CD4-positive, alpha-beta T cell (primary cell): ENCODE measurements at regions of chr15 and their contacts with region 1.

Region 1: GRCh38 chr15:78077058-78077877 is at the start of gene TBC1D2B:
- DNase-seq: peak; percentile 46 to 88 (median 66)
- ATAC-seq: peak; percentile 73
- H3K4me3 ChIP-seq: peak within 1 kb of the TSS; percentile 96
- H3K4me3 Mint-ChIP-seq: peak within 1 kb of the TSS; percentile 99
- H3K27ac ChIP-seq: peak within 1 kb of the TSS; percentile 68 to 75
- H3K27ac Mint-ChIP-seq: no peak within 1 kb of the TSS
- H3K4me1 ChIP-seq: peaks cover 48% of the 10 kb centered on the region
- H3K4me1 Mint-ChIP-seq: peaks cover 47% of the 10 kb centered on the region
- H3K27me3 ChIP-seq: no peaks in the 10 kb centered on the region
- H3K27me3 Mint-ChIP-seq: no peaks in the 10 kb centered on the region
- CTCF ChIP-seq: no peak
- total RNA-seq, gene TBC1D2B: 89.3 to 97.6 TPM

Region 2: DNA sequence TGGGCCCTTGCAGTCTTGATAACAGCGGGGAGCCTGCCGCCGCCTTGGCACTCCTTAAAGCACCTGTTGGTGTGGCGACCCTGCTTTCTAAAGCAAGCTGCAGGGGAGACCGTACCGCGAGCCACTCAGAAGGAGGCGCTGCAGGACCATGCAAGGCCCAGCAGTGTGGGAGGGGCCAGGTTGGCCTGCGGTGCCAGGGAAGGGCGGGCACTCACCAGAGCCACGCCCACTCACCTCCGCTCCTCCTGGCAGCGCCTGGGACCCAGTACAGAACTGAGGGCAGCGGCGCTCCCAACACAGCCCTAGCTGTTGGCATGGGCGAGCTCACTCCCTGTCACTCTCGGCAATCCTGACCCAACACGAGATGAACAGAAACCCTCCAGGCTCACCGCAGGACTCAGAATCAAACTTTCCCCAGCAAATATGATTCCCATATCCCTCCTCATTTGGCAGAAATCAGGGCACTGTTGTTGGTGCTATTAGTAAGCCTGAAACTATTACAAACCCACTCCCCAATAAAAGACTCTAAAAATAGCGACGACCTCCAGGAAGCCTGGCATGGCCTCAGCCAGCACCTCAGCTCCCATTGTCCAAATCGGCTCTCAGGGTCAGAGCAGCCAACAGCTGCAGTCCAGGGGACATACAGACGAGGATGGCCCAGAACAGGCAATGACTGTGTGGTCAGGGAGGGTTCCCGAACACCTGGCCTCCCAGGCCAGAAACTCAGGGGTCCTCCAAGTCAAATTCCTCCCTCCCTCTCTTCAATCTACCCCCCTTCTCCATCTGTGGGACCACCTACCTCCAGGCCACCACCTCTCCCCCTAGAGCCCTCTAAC is 77.0 kb before region 1 on chr15:
- CTCF ChIA-PET with region 1: interaction called, 3 read pairs
- POLR2A ChIA-PET with region 1: no interaction called
- intact Hi-C with region 1: loop called in 1 of 2 experiments (anchors 2 kb)
- DNase-seq: peak; percentile 64 to 91 (median 78)
- ATAC-seq: peak; percentile 100
- H3K4me3 ChIP-seq: no peak overlapping the region
- H3K4me3 Mint-ChIP-seq: no peak overlapping the region
- H3K27ac ChIP-seq: no peak overlapping the region
- H3K27ac Mint-ChIP-seq: peak overlapping the region; percentile 45
- H3K4me1 ChIP-seq: peaks cover 14% of the 10 kb centered on the region
- H3K4me1 Mint-ChIP-seq: peaks cover 11% of the 10 kb centered on the region
- H3K27me3 ChIP-seq: no peaks in the 10 kb centered on the region
- H3K27me3 Mint-ChIP-seq: no peaks in the 10 kb centered on the region
- CTCF ChIP-seq: peak; percentile 70

Region 3: GRCh38 chr15:78034495-78035191 is 42.6 kb before region 1 on chr15:
- CTCF ChIA-PET with region 1: interaction called, 3 read pairs
- POLR2A ChIA-PET with region 1: interaction called, 31 read pairs
- intact Hi-C with region 1: loop called (anchors 1 to 2 kb)
- DNase-seq: peak; percentile 60 to 89 (median 76)
- ATAC-seq: peak; percentile 89
- H3K4me3 ChIP-seq: peak overlapping the region; percentile 9
- H3K4me3 Mint-ChIP-seq: peak overlapping the region; percentile 67
- H3K27ac ChIP-seq: peak overlapping the region; percentile 56 to 72
- H3K27ac Mint-ChIP-seq: peak overlapping the region; percentile 95
- H3K4me1 ChIP-seq: peaks cover 68% of the 10 kb centered on the region
- H3K4me1 Mint-ChIP-seq: peaks cover 90% of the 10 kb centered on the region
- H3K27me3 ChIP-seq: no peaks in the 10 kb centered on the region
- H3K27me3 Mint-ChIP-seq: no peaks in the 10 kb centered on the region
- CTCF ChIP-seq: no peak

Region 4: DNA sequence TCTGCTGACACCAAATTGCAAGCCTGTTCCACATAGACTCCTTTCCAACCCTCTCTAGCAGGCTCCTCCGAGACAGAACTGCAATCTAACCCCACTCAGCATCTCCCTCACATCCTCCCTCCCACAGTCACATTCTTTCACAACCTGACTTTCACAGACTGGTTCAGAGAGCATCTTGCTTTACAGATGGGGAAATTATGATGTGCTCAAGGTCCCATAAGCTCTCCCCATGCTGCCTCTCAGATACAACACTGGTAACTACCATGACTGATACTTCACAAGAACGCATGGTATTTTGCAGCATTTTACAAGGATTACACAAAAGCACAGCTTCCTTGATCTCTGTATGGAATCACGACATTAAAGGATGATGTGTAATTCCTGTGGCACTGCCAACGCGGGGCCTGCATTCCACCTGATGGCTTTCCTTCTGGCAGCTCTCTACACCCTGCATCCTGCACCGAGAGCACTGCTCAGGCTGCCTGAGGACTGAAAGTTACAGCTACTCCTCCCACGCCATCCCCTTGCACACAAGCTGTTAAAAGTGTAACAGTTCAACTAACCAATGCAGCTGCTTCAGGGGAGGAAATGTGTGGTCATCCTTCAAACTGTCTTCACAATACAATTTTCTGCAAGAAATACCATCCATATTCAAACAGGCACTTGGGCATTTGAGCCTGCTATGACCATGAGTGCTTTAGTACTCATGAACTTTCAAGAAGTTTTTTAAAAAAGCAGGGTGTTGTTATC is 27.4 kb before region 1 on chr15:
- CTCF ChIA-PET with region 1: interaction called, 5 read pairs
- POLR2A ChIA-PET with region 1: interaction called, 304 read pairs
- intact Hi-C with region 1: loop called in 1 of 2 experiments (anchors 2 kb)
- DNase-seq: peak in 8 of 14 experiments; percentile 25 to 79 (median 45)
- ATAC-seq: peak; percentile 47
- H3K4me3 ChIP-seq: peak overlapping the region; percentile 16
- H3K4me3 Mint-ChIP-seq: peak overlapping the region; percentile 76
- H3K27ac ChIP-seq: peak overlapping the region; percentile 78 to 83
- H3K27ac Mint-ChIP-seq: peak overlapping the region; percentile 84
- H3K4me1 ChIP-seq: peaks cover 89% of the 10 kb centered on the region
- H3K4me1 Mint-ChIP-seq: peaks cover 98% of the 10 kb centered on the region
- H3K27me3 ChIP-seq: no peaks in the 10 kb centered on the region
- H3K27me3 Mint-ChIP-seq: no peaks in the 10 kb centered on the region
- CTCF ChIP-seq: no peak

Region 5: DNA sequence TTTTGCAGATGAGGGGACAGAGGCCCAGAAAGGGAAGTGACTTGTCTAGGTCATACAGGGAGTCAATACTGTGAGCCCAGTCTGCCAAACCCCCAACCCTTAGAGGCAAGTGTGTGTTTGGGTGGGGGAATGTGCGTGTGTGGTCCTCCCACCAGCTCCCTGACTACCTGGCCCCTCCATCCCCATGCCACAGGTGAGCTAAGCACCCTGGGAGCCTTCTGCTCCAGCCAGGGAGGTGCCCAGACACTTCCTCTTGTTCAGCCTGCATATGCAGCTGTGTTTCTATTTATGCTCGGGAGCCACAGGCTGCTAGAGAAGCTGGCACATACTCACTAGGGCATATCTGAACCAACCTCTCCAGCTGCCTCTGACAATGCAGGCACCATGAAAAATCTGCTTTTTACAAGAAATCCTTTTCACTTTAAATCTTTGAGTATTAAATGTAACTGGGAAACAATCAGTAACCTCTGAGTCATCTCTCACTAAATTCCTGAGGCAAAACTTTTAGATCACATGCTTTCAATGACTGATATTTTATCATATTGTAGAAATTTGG is 20.5 kb before region 1 on chr15:
- CTCF ChIA-PET with region 1: interaction called, 9 read pairs
- POLR2A ChIA-PET with region 1: interaction called, 304 read pairs
- intact Hi-C with region 1: loop called (anchors 2 kb)
- DNase-seq: peak in 7 of 14 experiments; percentile 27 to 58 (median 42)
- ATAC-seq: peak; percentile 57
- H3K4me3 ChIP-seq: peak overlapping the region; percentile 16
- H3K4me3 Mint-ChIP-seq: peak overlapping the region; percentile 50
- H3K27ac ChIP-seq: peak overlapping the region; percentile 58 to 79
- H3K27ac Mint-ChIP-seq: peak overlapping the region; percentile 84
- H3K4me1 ChIP-seq: peaks cover 89% of the 10 kb centered on the region
- H3K4me1 Mint-ChIP-seq: peaks cover 87% of the 10 kb centered on the region
- H3K27me3 ChIP-seq: no peaks in the 10 kb centered on the region
- H3K27me3 Mint-ChIP-seq: no peaks in the 10 kb centered on the region
- CTCF ChIP-seq: no peak

Region 6: GRCh38 chr15:78065284-78065872 is 11.9 kb before region 1 on chr15:
- CTCF ChIA-PET with region 1: interaction called, 9 read pairs
- POLR2A ChIA-PET with region 1: interaction called, 304 read pairs
- intact Hi-C with region 1: no loop called
- DNase-seq: peak in 3 of 14 experiments; percentile 50 to 65 (median 50)
- ATAC-seq: peak; percentile 13
- H3K4me3 ChIP-seq: peak overlapping the region; percentile 9
- H3K4me3 Mint-ChIP-seq: no peak overlapping the region
- H3K27ac ChIP-seq: peak overlapping the region; percentile 39 to 79
- H3K27ac Mint-ChIP-seq: no peak overlapping the region
- H3K4me1 ChIP-seq: peaks cover 86% of the 10 kb centered on the region
- H3K4me1 Mint-ChIP-seq: peaks cover 2% of the 10 kb centered on the region
- H3K27me3 ChIP-seq: no peaks in the 10 kb centered on the region
- H3K27me3 Mint-ChIP-seq: no peaks in the 10 kb centered on the region
- CTCF ChIP-seq: no peak

Region 7: DNA sequence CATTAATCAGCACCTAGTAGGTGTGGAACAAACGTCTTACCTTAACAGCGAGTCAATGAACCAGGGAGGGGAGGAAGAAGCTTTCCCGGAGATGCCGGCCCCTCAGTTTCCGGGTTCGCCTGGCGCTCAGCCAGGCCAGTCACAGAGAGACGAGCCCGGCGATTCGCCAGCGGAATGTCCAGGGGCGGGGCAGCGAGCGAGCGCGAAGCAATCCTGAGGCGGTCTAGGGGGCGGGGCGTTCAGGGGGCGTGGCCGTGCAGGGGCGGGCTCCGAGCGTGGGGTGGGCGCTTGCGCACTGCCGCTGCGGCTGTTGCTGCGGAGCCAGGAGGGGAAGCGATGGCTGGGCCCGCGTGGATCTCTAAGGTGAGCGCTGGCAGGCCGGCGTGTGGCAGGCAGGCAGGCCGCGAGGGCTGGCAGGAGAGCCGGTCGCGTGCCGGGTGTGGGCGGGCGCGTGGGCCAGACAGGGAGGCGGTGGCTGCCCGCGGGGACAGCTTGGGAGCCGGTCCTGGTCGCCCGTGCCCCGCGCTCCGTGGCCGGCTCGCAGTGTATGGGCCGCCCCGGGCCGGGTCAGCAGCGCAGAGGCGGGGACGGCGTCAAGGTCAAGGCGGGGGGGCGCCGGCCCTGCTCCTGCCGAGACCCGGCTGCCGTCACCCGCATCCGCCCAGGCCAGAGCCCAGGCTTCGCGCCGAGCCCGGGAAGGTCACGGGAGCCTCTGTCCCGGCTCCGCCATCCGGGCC is 72.0 kb after region 1 on chr15 and contains the start of gene IDH3A:
- CTCF ChIA-PET with region 1: no interaction called
- POLR2A ChIA-PET with region 1: no interaction called
- intact Hi-C with region 1: no loop called
- DNase-seq: peak; percentile 99 to 100 (median 100)
- ATAC-seq: peak; percentile 94
- H3K4me3 ChIP-seq: peak within 1 kb of the TSS; percentile 69
- H3K4me3 Mint-ChIP-seq: peak within 1 kb of the TSS; percentile 97
- H3K27ac ChIP-seq: peak within 1 kb of the TSS in 1 of 2 donors; percentile 29
- H3K27ac Mint-ChIP-seq: peak within 1 kb of the TSS; percentile 91
- H3K4me1 ChIP-seq: peaks cover 27% of the 10 kb centered on the region
- H3K4me1 Mint-ChIP-seq: peaks cover 45% of the 10 kb centered on the region
- H3K27me3 ChIP-seq: no peaks in the 10 kb centered on the region
- H3K27me3 Mint-ChIP-seq: no peaks in the 10 kb centered on the region
- CTCF ChIP-seq: no peak
- total RNA-seq, gene IDH3A: 47.5 to 47.6 TPM

Region 8: DNA sequence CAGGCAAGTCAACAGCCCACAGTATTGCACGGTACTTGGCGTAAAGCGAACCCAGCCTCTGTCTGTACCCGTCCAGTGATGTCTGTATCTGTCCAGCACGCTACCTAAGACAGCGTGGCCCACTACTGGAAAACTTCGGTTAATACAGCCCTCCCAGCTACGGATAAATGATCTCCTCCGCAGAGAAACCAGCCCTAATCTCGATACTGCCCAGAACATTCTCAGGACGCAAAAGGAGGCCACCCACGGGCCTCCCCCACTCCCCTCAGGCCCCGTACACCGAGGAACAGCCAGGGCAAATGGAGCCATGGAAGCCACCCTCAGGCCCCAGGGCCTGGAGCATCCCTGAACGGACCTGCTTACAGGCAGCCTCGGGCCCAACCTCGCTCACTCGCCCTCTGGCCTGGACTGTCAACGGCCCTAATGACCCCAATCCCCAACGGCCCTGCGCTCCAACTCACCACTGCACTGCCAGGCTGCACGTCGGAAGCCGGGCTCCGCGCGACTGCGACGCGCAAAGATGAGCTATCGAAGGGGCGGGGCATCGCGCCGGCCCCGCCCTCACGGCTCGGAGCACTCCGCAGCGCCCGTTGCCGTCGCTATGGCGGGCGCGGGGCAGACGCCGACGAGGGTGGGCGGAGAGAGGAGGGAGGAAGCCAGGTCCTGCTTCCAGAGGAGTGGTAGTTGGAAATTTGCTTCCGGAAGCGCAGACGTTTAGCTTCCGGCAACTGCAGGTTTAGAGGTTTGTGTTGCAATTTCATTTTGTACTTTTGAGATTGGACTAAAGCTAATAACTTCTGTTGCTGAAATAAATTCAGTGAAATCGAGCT is 222.0 kb after region 1 on chr15 and contains the start of gene SKIC8:
- CTCF ChIA-PET with region 1: no interaction called
- POLR2A ChIA-PET with region 1: no interaction called
- intact Hi-C with region 1: loop called in 1 of 2 experiments (anchors 5 kb)
- DNase-seq: peak; percentile 79 to 96 (median 87)
- ATAC-seq: peak; percentile 96
- H3K4me3 ChIP-seq: peak within 1 kb of the TSS; percentile 99
- H3K4me3 Mint-ChIP-seq: peak within 1 kb of the TSS; percentile 96
- H3K27ac ChIP-seq: peak within 1 kb of the TSS; percentile 50 to 77
- H3K27ac Mint-ChIP-seq: peak within 1 kb of the TSS; percentile 88
- H3K4me1 ChIP-seq: peaks cover 18% of the 10 kb centered on the region
- H3K4me1 Mint-ChIP-seq: peaks cover 30% of the 10 kb centered on the region
- H3K27me3 ChIP-seq: no peaks in the 10 kb centered on the region
- H3K27me3 Mint-ChIP-seq: no peaks in the 10 kb centered on the region
- CTCF ChIP-seq: no peak
- total RNA-seq, gene SKIC8: 13.3 to 16.7 TPM